ENCODE measurements at regions of chr12 and their contacts with region 1.

Region 1: DNA sequence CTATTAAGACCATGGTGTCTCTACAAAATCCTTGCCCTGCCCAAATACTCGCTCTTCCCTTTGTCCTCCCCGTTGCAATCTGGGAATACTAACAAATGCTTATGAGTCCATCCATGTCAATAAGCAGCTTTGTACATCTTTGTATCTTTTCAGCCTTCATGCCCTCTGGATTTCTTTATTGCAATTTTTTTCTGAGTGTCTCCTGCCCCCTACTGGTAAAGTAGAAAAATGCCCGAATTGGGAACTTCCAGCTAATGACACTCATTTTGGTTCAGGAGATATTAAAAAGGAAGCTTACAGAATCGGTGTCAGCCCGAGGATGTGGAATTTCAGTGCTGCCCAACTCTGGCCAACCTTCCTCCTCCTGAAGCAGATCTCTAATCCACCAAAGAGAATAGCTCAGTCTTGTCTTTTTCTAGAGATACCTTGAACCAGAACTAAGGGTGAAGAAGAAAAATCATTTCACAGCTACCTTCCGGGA is 46.0 kb downstream of the SH2B3 start:
- DNase-seq: no peak
- ATAC-seq: peak; percentile 50
- H3K4me3 Mint-ChIP-seq: no peak overlapping the region
- H3K27ac Mint-ChIP-seq: no peak overlapping the region
- H3K4me1 Mint-ChIP-seq: peaks cover 45% of the 10 kb centered on the region
- H3K27me3 Mint-ChIP-seq: no peaks in the 10 kb centered on the region

Region 2: GRCh38 chr12:111330800-111331752 is 120.6 kb before region 1 on chr12:
- CTCF ChIA-PET with region 1: interaction called, 10 read pairs
- DNase-seq: no peak
- ATAC-seq: peak; percentile 42
- H3K4me3 Mint-ChIP-seq: no peak overlapping the region
- H3K27ac Mint-ChIP-seq: no peak overlapping the region
- H3K4me1 Mint-ChIP-seq: no peaks in the 10 kb centered on the region
- H3K27me3 Mint-ChIP-seq: peaks cover 9% of the 10 kb centered on the region

Region 3: GRCh38 chr12:111424793-111425251 is 26.9 kb before region 1 on chr12:
- CTCF ChIA-PET with region 1: interaction called, 38 read pairs
- DNase-seq: no peak
- ATAC-seq: no peak
- H3K4me3 Mint-ChIP-seq: no peak overlapping the region
- H3K27ac Mint-ChIP-seq: peak overlapping the region; percentile 65
- H3K4me1 Mint-ChIP-seq: peaks cover 61% of the 10 kb centered on the region
- H3K27me3 Mint-ChIP-seq: no peaks in the 10 kb centered on the region

Region 4: DNA sequence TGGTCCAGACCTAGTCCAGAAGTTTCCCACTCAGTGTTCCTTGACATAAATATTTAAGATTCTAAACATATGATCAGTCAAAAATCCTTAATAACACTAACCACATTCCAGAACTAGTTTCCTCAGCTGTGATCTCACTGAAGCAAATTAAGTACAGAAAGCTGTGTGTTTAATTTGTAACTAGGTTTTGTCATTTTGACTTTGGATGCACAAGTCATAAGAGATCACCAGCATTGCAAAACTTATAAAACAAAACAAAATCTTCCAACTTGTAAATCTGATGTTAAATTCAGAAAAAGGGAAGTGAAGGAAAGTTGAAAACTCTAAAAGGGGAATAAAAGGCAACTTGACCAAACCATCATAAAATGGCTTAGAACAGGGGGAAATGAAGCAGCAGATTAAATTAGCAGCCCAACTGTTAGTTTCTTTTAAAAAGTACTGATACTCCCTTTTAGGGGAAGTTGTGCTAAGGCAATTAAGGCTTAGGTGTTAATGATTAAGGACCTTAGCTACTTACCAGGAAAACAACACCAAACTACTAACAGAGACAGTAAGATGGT is 10.6 kb after region 1 on chr12:
- CTCF ChIA-PET with region 1: interaction called, 32 read pairs
- DNase-seq: no peak
- ATAC-seq: no peak
- H3K4me3 Mint-ChIP-seq: no peak overlapping the region
- H3K27ac Mint-ChIP-seq: no peak overlapping the region
- H3K4me1 Mint-ChIP-seq: peaks cover 11% of the 10 kb centered on the region
- H3K27me3 Mint-ChIP-seq: no peaks in the 10 kb centered on the region

Region 5: DNA sequence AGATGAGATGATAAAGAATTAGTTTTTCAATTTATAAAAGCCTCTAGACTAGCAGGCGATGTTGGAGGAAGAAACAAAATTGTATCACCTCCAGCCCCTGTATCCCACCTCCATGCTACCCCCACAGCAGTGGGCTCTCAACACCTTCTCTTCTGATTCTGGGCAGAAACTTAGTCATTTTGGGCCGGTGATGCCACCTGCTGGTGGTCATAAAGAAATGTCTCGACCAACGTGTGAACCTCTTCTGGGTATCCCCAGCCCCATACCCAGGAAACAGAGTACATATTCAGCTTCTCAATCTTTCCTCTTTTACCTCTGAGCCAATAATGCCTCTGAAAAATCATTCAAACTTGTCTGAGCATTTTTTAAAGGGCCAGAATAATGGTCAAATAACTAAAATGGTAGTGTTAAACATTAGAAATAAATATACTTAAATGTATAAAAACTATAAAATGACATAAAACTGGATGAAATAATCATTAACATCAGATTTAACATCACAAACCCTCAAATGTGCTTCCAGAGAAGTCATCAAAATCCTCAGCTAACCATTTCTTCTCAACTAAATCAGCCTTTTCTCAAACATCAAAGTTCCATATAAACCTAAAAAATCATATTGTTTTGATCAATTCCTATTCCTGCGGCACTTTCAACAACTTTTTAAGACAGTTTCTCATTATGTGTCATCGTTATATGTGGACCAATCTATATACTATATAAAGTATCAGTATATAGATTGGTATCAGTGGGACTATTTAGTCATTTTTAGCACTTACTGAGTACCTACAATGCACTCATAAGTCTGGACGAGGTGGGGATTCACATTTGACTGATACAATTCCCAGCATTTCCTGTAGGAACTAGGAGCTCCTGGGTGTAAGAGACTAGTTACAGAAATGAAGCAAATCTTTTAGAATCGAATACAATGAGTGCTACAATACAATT is 78.0 kb after region 1 on chr12:
- CTCF ChIA-PET with region 1: interaction called, 40 read pairs
- DNase-seq: peak; percentile 76
- ATAC-seq: peak; percentile 76
- H3K4me3 Mint-ChIP-seq: no peak overlapping the region
- H3K27ac Mint-ChIP-seq: no peak overlapping the region
- H3K4me1 Mint-ChIP-seq: peaks cover 11% of the 10 kb centered on the region
- H3K27me3 Mint-ChIP-seq: no peaks in the 10 kb centered on the region